PC-3 (cell line): ENCODE measurements at regions of chr12 and their contacts with region 1.

Region 1: DNA sequence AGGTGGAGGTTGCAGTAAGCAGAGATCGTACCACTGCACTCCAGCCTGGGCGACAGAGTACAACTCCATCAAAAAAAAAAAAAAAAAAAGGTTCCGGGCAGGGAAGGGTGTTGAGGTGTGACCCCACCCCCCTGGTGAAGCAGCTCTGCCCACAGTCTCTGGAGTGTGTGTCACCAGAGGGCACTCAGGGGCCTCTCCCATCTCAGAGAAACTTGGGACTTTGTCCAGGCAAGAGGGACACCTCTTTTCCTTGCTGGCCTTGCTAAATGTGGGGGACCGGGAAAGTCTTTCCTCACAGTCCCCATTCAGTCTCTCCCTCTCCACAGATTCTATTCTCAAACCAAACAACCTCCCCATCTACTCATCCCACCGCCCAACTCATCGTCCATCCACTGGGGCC is 43.5 kb downstream of the RFLNA start:
- DNase-seq: no peak
- ATAC-seq: no peak; the same call in 1 of the 2 replicates
- H3K4me3 ChIP-seq: no peak overlapping the region
- H3K27ac ChIP-seq: no peak overlapping the region
- H3K4me1 ChIP-seq: no peaks in the 10 kb centered on the region
- H3K27me3 ChIP-seq: no peaks in the 10 kb centered on the region
- CTCF ChIP-seq: no peak

Region 2: DNA sequence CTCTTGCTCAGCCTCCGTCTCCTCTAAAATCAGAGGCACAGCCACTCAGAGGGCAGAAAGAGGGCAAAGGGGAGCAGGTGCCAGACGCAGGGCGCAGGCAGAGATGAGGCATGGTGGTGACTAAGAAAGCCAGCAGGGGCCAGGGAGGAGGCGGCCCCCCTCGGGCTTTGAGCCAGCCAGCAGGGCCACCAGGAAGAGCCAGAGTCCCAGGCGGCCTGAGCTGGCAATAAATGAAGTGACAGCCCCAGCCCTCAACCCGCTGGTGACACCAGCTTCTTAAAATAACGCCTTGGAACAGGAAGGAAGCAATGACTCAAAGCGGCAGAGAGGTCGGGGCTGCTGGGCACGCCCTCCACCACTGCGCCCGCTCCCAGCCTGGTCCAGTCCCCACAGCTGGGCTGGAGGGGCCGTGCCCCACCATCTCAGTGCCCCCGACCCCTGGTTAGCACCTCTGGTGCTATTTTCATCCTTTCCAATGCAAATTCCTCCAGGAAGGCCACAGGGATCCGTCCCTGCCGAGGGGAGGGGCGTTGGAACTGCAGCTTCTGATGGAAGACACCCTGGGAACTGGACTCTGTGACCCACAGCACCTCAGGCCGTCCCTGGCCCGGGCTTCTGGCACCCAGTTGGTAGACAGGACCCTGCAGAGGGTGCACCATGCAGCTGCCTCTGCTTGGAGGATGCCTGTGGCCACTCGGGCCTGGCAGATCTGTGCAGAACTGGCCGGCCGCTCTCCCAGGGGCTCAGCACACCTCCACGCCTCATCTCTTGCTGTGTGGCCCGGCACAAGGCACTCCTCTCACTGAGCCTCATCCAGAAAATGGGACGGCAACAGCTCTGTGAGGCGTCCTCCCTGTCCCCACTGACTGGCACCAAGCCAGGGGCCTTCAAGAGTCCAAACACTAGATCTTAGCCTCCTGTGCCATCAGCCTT is 115.2 kb after region 1 on chr12:
- CTCF ChIA-PET with region 1: interaction called, 14 read pairs
- POLR2A ChIA-PET with region 1: no interaction called
- intact Hi-C with region 1: no loop called
- DNase-seq: peak; percentile 91
- ATAC-seq: peak; percentile 89
- H3K4me3 ChIP-seq: peak overlapping the region; percentile 13; the same call in 1 of the 2 replicates
- H3K27ac ChIP-seq: peak overlapping the region; percentile 54
- H3K4me1 ChIP-seq: peaks cover 22% of the 10 kb centered on the region
- H3K27me3 ChIP-seq: no peaks in the 10 kb centered on the region
- CTCF ChIP-seq: no peak